ENCODE measurements at regions of chr10 and their contacts with region 1.

Region 1: DNA sequence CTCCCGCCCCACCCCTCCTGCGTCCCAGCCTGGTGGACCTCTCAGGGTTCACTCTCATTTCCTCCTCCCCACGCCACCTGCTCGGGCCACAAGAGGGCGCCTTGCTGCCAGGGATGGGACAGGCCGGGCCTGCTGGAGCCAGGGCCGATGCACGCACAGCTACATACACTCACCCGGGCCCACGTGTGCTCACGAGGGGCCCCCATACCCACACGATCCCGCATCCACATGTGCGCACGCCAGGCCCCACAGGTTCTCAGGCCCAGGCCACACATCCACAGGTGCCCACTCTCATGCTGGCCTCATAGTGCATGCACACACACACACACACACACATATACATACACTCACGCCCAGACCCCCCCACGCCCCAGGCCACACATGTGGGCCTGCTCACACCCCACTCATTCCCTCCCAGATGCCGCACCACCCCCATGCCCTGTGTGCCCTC is 68.6 kb downstream of the LHPP start:
- DNase-seq: peak; percentile 95

Region 2: DNA sequence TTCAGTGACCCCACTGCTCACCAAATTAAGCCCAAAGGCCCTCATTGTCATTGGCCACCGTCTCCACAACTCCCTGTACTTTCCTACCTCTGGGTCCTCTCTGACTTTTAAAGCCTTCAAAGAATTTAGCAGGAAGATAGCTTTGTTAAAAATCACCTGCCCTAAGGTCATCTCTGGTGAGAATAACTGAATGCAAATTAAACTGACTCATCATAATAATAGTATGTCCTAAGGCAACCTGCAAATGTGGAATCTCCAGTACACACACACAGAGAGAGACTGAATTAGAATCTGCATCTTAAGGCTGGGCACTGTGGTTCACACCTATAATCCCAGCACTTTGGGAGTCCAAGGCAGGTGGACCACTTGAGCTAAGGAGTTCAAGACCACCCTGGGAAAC is 135.7 kb before region 1 on chr10:
- intact Hi-C with region 1: no loop called
- DNase-seq: no peak

Region 3: GRCh38 chr10:124827474-124827873 is 297.2 kb after region 1 on chr10:
- intact Hi-C with region 1: loop called (anchors 5 to 10 kb)
- DNase-seq: no peak